H1 (cell line): ENCODE measurements at regions of chr16 and their contacts with region 1.

Region 1: DNA sequence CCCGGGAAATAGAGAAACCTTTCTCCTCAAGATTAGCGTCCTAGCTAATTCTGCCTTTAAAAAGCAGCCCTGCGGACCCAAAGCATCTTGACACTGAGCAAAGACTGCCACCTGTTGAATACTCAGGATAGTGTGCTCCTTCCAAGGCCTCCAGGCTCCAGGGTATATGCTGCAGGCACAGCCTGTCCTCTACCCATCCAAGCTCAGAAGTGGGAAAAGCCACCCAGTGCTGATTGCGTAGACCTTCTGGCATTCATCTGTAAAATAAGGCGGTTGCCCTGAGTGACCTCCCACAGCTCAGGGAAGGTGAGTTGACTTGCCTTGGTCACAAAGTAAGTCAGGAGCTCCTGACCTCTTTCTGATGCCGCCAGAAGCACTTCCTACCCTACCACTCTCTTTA is 456.1 kb upstream of the DYNLRB2 start:
- DNase-seq: peak; percentile 36 to 56
- H3K4me3 ChIP-seq: no peak overlapping the region
- H3K27ac ChIP-seq: no peak overlapping the region
- H3K4me1 ChIP-seq: no peaks in the 10 kb centered on the region; a peak in 1 of 7 replicates
- H3K27me3 ChIP-seq: no peaks in the 10 kb centered on the region
- CTCF ChIP-seq: peak; percentile 55 to 81 (median 73)
- EP300 ChIP-seq: no peak
- POLR2A ChIP-seq: no peak
- RAD21 ChIP-seq: peak; percentile 94

Region 2: GRCh38 chr16:79601931-79602627 is 482.6 kb before region 1 on chr16:
- CTCF ChIA-PET with region 1: interaction called, 10 read pairs
- POLR2A ChIA-PET with region 1: no interaction called
- DNase-seq: peak; percentile 54 to 89
- H3K4me3 ChIP-seq: peak overlapping the region; percentile 70 to 75 (median 72)
- H3K27ac ChIP-seq: no peak overlapping the region
- H3K4me1 ChIP-seq: peaks cover 0 to 7% (median 0%) of the 10 kb centered on the region in 4 experiments; a peak in 1 of 7 replicates
- H3K27me3 ChIP-seq: peaks cover 0 to 8% (median 6%) of the 10 kb centered on the region in 4 experiments; a peak in 3 of 7 replicates
- CTCF ChIP-seq: peak; percentile 23 to 71 (median 58); a peak in 3 of 4 replicates
- EP300 ChIP-seq: no peak
- POLR2A ChIP-seq: no peak
- RAD21 ChIP-seq: peak; percentile 77 to 82

Region 3: GRCh38 chr16:80065568-80065967 is 19.1 kb before region 1 on chr16:
- CTCF ChIA-PET with region 1: interaction called, 11 read pairs
- POLR2A ChIA-PET with region 1: no interaction called
- DNase-seq: no peak
- H3K4me3 ChIP-seq: no peak overlapping the region
- H3K27ac ChIP-seq: no peak overlapping the region
- H3K4me1 ChIP-seq: peaks cover 0 to 4% (median 0%) of the 10 kb centered on the region in 4 experiments; a peak in 3 of 7 replicates
- H3K27me3 ChIP-seq: no peaks in the 10 kb centered on the region
- CTCF ChIP-seq: no peak
- EP300 ChIP-seq: no peak
- POLR2A ChIP-seq: no peak
- RAD21 ChIP-seq: no peak